H1 (cell line): ENCODE measurements at regions of chr6 and their contacts with region 1.

Region 1: GRCh38 chr6:163170294-163170883 is 244.1 kb upstream of the QKI start:
- DNase-seq: peak in 1 of 2 experiments; percentile 73
- H3K4me3 ChIP-seq: no peak overlapping the region
- H3K27ac ChIP-seq: no peak overlapping the region
- H3K4me1 ChIP-seq: no peaks in the 10 kb centered on the region
- H3K27me3 ChIP-seq: no peaks in the 10 kb centered on the region
- CTCF ChIP-seq: peak; percentile 55 to 76 (median 70)
- EP300 ChIP-seq: no peak
- POLR2A ChIP-seq: no peak
- RAD21 ChIP-seq: peak; percentile 34 to 54; a peak in 3 of 4 replicates

Region 2: DNA sequence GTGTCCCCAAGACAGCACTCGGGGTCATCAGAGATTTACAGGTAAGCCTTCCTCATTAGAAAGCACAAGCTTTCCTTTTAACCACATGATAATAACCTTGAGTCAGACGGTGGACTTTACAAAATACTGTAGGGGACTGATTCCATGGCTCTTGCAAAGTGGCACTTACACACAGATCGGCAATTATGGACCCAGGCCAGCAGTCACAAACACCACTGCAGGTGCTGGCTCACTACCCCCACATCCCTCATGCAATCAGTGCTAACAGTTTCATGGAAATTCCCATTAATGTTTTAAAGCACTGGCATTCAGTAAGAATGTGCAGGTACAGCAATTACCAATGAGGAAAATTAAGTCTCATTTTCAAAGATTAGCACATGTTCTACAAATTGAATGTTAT is 959.4 kb before region 1 on chr6:
- CTCF ChIA-PET with region 1: no interaction called
- POLR2A ChIA-PET with region 1: no interaction called
- DNase-seq: no peak
- H3K4me3 ChIP-seq: no peak overlapping the region
- H3K27ac ChIP-seq: no peak overlapping the region
- H3K4me1 ChIP-seq: peaks cover 0 to 6% (median 1%) of the 10 kb centered on the region in 4 experiments; a peak in 2 of 7 replicates
- H3K27me3 ChIP-seq: no peaks in the 10 kb centered on the region
- CTCF ChIP-seq: no peak
- EP300 ChIP-seq: no peak
- POLR2A ChIP-seq: no peak
- RAD21 ChIP-seq: no peak

Region 3: DNA sequence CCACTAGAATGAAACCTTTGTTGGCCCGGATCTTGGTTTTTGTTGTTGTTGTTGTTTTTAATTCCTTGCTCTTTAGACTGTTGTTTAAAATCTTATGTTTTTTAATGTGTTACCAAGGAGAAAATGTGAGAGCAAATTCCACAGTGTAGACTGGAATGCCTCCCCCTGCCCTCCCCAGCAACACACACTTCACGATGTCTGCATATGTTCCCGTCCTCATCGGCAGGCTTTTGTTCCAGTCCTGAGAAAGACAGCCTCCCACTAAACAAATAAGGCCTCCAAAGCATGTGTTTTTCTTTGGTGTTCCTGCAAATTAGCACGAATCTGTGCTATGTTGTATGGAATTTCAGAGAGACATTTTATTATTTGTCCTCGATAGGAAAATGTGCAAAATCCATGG is 19.2 kb before region 1 on chr6:
- CTCF ChIA-PET with region 1: interaction called, 12 read pairs
- POLR2A ChIA-PET with region 1: interaction called, 3 read pairs
- DNase-seq: no peak
- H3K4me3 ChIP-seq: no peak overlapping the region
- H3K27ac ChIP-seq: no peak overlapping the region
- H3K4me1 ChIP-seq: no peaks in the 10 kb centered on the region; a peak in 1 of 7 replicates
- H3K27me3 ChIP-seq: no peaks in the 10 kb centered on the region
- CTCF ChIP-seq: no peak
- EP300 ChIP-seq: no peak
- POLR2A ChIP-seq: no peak
- RAD21 ChIP-seq: no peak

Region 4: GRCh38 chr6:163183806-163184205 is 13.4 kb after region 1 on chr6:
- CTCF ChIA-PET with region 1: interaction called, 11 read pairs
- POLR2A ChIA-PET with region 1: no interaction called
- DNase-seq: no peak
- H3K4me3 ChIP-seq: no peak overlapping the region
- H3K27ac ChIP-seq: no peak overlapping the region
- H3K4me1 ChIP-seq: peaks cover 0 to 16% (median 3%) of the 10 kb centered on the region in 4 experiments; a peak in 5 of 7 replicates
- H3K27me3 ChIP-seq: no peaks in the 10 kb centered on the region
- CTCF ChIP-seq: no peak
- EP300 ChIP-seq: no peak
- POLR2A ChIP-seq: no peak
- RAD21 ChIP-seq: no peak

Region 5: GRCh38 chr6:163218361-163218894 is 48.0 kb after region 1 on chr6:
- CTCF ChIA-PET with region 1: no interaction called
- POLR2A ChIA-PET with region 1: no interaction called
- DNase-seq: no peak
- H3K4me3 ChIP-seq: no peak overlapping the region
- H3K27ac ChIP-seq: no peak overlapping the region
- H3K4me1 ChIP-seq: peaks cover 0 to 2% (median 0%) of the 10 kb centered on the region in 4 experiments; a peak in 1 of 7 replicates
- H3K27me3 ChIP-seq: no peaks in the 10 kb centered on the region
- CTCF ChIP-seq: no peak
- EP300 ChIP-seq: no peak
- POLR2A ChIP-seq: no peak
- RAD21 ChIP-seq: no peak